ENCODE measurements at regions of chr15 and their contacts with region 1.

Region 1: GRCh38 chr15:85527895-85528294 is 147.5 kb downstream of the AKAP13 start:
- DNase-seq: no peak
- ATAC-seq: no peak
- H3K4me3 ChIP-seq: no peak overlapping the region
- H3K4me3 Mint-ChIP-seq: no peak overlapping the region
- H3K27ac ChIP-seq: no peak overlapping the region
- H3K27ac Mint-ChIP-seq: no peak overlapping the region
- H3K4me1 ChIP-seq: peaks cover 8% of the 10 kb centered on the region
- H3K4me1 Mint-ChIP-seq: peaks cover 25 to 33% of the 10 kb centered on the region in 2 donors
- H3K27me3 ChIP-seq: no peaks in the 10 kb centered on the region
- H3K27me3 Mint-ChIP-seq: no peaks in the 10 kb centered on the region
- CTCF ChIP-seq: no peak

Region 2: DNA sequence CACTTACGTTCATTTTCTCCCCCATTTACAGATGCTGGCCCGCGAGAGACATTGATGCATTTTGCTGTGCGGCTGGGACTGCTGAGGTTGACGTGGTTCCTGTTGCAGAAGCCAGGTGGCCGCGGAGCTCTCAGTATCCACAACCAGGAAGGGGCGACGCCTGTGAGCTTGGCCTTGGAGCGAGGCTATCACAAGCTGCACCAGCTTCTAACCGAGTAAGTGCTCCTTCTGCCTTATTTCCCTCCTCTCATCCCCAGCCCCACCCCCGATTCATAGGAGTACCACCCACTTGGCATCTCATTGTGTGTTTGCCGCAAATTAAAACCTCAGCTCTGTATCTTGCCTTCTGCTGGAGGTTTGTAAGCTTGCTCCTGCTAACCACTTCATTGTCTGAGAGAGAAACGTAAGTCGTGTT is 15.9 kb after region 1 on chr15:
- intact Hi-C with region 1: loop called (anchors 1 kb)
- DNase-seq: peak; percentile 47 to 73
- ATAC-seq: peak; percentile 80 to 88 (median 86)
- H3K4me3 ChIP-seq: peak overlapping the region; percentile 14
- H3K4me3 Mint-ChIP-seq: peak overlapping the region; percentile 84
- H3K27ac ChIP-seq: peak overlapping the region; percentile 53
- H3K27ac Mint-ChIP-seq: peak overlapping the region; percentile 83 to 91
- H3K4me1 ChIP-seq: peaks cover 10% of the 10 kb centered on the region
- H3K4me1 Mint-ChIP-seq: peaks cover 53 to 54% of the 10 kb centered on the region in 2 donors
- H3K27me3 ChIP-seq: no peaks in the 10 kb centered on the region
- H3K27me3 Mint-ChIP-seq: no peaks in the 10 kb centered on the region
- CTCF ChIP-seq: peak; percentile 8

Measured in natural killer cell (primary cell).